Tibial artery (tissue), 4 donors: ENCODE measurements at regions of chr11 and their contacts with region 1.

Region 1: GRCh38 chr11:117107701-117108590 is 9.7 kb upstream of the SIK3 start:
- DNase-seq: no peak
- H3K4me3 ChIP-seq: no peak overlapping the region
- H3K27ac ChIP-seq: no peak overlapping the region
- H3K4me1 ChIP-seq: peaks cover 0 to 6% (median 1%) of the 10 kb centered on the region in 4 donors
- H3K27me3 ChIP-seq: no peaks in the 10 kb centered on the region
- CTCF ChIP-seq: no peak

Region 2: DNA sequence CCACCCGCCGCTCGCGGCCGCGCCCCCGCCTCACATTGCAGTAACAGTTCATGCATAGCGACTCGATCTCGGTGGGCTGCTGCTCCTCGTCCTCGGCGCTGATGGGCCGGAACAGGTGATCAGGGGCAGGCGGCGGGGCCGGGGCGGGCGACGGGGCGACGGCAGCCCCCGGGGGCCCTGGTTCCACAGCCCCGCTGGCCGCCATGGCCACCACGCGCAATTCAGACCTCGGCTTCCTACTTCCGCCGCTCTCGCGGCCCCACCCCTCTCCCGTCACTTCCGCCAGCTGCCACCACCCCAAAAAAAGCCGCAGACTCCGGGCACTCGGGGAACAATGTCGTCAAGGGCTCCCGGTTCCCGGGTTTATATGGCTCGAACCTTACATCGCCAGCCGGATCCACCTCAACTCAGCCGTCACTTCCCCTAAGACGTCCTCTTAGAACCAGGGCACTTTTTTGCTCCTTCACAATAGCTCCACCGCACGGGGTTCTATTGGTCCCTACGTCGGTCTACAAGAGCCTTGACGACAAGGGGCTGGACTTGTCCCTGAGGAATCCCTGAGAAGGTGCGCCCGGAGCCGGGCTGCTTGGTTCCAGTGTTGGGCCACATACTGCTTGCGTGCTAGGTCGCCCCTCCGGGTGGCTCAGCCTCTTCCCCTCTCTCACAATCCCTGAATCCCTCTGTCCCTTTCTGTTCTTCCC is 320.0 kb before region 1 on chr11 and contains the start of gene ZPR1:
- intact Hi-C with region 1: loop called (anchors 5 kb)
- DNase-seq: peak; percentile 81 to 89
- H3K4me3 ChIP-seq: peak within 1 kb of the TSS; percentile 98 to 100
- H3K27ac ChIP-seq: peak within 1 kb of the TSS; percentile 86 to 88
- H3K4me1 ChIP-seq: peaks cover 0 to 35% (median 23%) of the 10 kb centered on the region in 4 donors
- H3K27me3 ChIP-seq: peaks cover 0 to 3% of the 10 kb centered on the region in 2 donors
- CTCF ChIP-seq: peak in 1 of 2 experiments; percentile 31

Region 3: GRCh38 chr11:116885951-116886655 is 221.8 kb before region 1 on chr11:
- intact Hi-C with region 1: loop called (anchors 2 kb)
- DNase-seq: no peak
- H3K4me3 ChIP-seq: no peak overlapping the region
- H3K27ac ChIP-seq: peak overlapping the region; percentile 41 to 68
- H3K4me1 ChIP-seq: peaks cover 0 to 27% (median 6%) of the 10 kb centered on the region in 4 donors
- H3K27me3 ChIP-seq: no peaks in the 10 kb centered on the region
- CTCF ChIP-seq: no peak